WTC11 (cell line): ENCODE measurements at regions of chr11 and their contacts with region 1.

Region 1: DNA sequence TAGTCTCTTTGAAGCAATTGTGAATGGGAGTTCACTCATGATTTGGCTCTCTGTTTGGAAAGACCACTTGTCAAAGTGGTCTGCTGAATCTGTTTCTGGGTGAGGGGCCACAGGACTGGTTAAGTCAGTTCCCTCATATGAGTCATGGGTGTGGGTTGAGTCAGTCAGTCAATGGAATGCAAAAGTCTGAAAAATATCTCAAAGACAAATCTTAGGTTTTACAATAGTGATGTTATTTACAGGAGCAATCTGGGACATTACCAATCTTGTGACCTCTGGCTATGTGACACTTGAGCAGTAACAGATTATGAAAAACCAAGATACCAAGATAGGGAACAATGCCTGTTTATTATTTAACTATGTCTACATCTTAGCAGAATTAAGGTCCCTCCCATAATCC is 311.6 kb downstream of the AASDHPPT start:
- DNase-seq: no peak
- ATAC-seq: no peak
- H3K4me3 Mint-ChIP-seq: no peak overlapping the region
- H3K27ac Mint-ChIP-seq: no peak overlapping the region
- H3K4me1 Mint-ChIP-seq: peaks cover 27% of the 10 kb centered on the region
- H3K27me3 Mint-ChIP-seq: no peaks in the 10 kb centered on the region
- CTCF ChIP-seq: no peak

Region 2: DNA sequence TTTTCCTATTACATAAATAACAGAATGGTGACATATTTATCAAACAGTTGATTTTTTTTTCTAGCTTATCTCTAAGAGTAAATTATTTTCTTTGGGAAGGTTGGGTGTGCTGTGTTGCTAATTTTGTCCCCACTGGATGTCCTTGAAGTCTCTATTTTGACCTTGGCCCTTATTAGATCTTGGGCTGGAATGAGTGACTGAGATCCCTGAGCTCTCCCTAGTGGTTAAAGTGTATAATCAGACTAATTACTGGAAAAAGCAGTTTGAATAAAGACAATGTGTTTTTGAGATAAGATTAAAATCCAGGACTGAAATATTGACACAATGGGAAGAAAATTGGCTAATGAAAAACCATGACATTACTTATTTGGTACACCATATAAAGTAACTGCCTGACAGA is 255.6 kb before region 1 on chr11:
- CTCF ChIA-PET with region 1: interaction called, 11 read pairs
- POLR2A ChIA-PET with region 1: no interaction called
- DNase-seq: no peak
- ATAC-seq: peak; percentile 43
- H3K4me3 Mint-ChIP-seq: no peak overlapping the region
- H3K27ac Mint-ChIP-seq: no peak overlapping the region
- H3K4me1 Mint-ChIP-seq: peaks cover 23% of the 10 kb centered on the region
- H3K27me3 Mint-ChIP-seq: no peaks in the 10 kb centered on the region
- CTCF ChIP-seq: no peak

Region 3: DNA sequence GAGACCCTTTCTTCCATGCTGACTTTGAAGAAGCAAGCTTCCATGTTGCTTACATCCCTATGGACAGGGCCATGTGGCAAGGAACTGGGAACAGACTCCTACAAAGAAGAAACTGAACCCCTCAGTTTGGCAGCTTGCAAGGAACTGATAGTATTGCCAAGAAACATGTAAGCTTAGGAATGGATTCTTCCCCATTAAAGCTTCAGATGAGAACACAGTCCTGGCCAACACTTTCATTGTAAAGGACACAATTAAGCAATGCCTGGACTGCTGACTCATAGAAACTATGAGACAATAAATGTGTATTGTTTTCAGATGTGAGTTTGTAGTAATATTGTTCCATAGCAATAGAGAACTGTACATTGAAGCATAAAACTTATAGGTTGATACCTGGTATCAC is 229.3 kb before region 1 on chr11:
- CTCF ChIA-PET with region 1: no interaction called
- POLR2A ChIA-PET with region 1: no interaction called
- DNase-seq: no peak
- ATAC-seq: no peak
- H3K4me3 Mint-ChIP-seq: no peak overlapping the region
- H3K27ac Mint-ChIP-seq: no peak overlapping the region
- H3K4me1 Mint-ChIP-seq: peaks cover 10% of the 10 kb centered on the region; the same call in 1 of the 2 replicates
- H3K27me3 Mint-ChIP-seq: no peaks in the 10 kb centered on the region
- CTCF ChIP-seq: no peak

Region 4: DNA sequence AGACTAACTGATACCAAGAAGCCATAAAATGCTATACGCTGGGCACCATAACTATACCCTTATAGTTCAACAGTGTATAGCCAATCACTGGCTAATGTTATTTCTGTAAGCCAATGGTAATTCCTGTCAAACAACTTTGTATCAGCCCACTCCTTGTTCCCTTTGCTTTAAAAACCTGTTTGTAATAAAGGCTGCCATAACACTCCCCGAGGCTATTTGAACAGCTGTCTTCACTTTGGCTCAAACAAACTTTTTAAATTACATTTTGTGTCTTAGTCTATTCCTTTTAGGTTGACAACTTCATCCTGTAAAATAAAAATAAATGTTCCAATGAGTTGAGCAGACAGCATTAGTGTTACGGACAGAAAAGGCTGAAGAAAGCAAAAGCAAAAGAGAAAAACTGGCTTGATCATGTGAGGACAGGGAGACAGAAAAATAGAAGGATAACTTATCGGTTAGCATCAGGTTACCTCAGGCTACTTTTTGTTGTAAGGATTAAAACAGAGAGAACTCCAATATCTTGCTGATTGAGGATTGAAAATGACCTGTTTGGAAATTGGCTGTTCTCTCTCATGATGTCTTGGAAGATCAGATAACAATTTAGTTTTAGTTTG is 216.6 kb before region 1 on chr11:
- CTCF ChIA-PET with region 1: no interaction called
- POLR2A ChIA-PET with region 1: no interaction called
- DNase-seq: no peak
- ATAC-seq: no peak
- H3K4me3 Mint-ChIP-seq: no peak overlapping the region
- H3K27ac Mint-ChIP-seq: no peak overlapping the region
- H3K4me1 Mint-ChIP-seq: peaks cover 24% of the 10 kb centered on the region
- H3K27me3 Mint-ChIP-seq: no peaks in the 10 kb centered on the region
- CTCF ChIP-seq: no peak